Psoas muscle (tissue), 8 donors: ENCODE measurements at regions of chr9 and their contacts with region 1.

Region 1: DNA sequence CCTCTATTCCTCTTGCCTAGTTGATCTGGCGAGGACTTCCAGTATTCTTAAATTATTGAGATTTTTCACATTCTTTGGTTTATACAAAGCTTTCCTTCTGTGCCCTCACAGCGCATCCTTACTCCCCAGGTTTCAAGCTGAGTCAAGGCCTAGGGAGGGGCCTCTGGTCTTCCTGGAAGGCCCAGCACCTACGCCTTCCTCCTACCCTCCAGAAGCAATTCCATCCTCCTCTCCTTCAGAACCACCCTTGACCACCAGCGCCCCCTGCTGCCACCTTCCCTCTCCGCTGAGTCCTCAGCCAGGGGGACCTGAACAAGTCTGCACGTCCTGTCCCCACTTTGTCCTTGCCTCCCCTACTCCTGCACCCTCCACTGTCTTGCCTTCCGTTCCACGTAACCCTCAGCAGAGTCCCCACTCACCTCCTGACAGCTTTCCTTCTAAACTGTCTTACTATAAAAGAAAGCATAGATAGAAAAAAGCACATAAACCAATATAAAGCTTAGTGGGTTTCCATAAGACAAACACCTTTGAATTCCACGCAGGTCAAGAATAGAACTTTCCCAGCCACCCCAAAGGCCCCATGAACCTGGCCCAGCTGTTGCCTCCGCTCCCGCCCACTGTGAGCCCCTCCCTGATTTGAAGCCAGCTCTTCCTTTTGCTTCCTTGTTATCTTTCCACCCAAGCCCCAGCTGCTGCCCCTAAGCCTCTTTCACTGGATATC is 63.0 kb upstream of the CTSL start:
- DNase-seq: peak; percentile 75 to 85
- ATAC-seq: peak; percentile 61 to 80 (median 70)
- H3K4me3 ChIP-seq: no peak overlapping the region
- H3K27ac ChIP-seq: no peak overlapping the region
- H3K4me1 ChIP-seq: no peaks in the 10 kb centered on the region
- H3K27me3 ChIP-seq: peaks cover 0 to 1% (median 0%) of the 10 kb centered on the region in 3 donors
- CTCF ChIP-seq: peak; percentile 68

Region 2: DNA sequence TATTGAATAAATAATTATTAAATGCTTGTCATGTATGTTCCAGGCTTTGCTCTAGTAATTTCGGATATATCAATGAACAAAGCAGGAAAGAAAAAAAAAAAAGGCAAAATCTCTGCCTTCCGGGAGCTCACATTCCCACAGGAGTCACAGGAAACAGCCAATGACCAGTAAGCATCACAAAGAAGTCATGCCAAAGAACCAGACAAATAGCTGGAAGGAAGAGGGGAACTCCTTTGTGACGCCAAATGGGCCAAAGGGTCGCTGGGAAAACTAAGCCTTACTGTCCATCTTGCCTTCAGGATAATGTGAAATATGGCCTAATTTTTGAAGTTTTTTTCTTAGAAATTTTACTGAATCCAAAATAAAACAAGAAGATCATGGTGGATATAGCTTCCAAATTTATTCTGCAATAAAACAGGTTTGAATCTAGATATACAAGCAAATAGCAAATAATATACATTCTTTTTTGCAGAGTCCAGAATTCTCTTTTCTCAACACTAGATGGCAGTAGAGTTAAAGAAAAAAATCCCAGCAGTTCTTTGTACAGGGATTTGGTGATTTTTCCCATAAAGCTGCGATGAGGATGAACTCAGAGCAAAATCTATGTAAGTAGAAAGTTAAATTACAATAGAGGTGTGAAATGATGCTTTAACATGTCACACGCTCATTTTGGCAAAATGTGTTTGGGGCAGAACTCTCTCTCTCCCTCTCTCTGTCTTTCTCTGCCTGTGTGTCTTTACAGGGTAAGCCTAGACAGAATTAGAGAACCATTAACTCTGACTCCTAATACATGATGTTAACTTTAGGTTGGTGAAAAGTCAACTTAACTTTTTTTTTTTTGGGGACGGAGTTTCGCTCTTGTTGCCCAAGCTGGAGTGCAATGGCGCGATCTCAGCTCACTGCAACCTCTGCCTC is 1248.7 kb before region 1 on chr9:
- intact Hi-C with region 1: loop called in 1 of 2 experiments (anchors 10 kb)
- DNase-seq: no peak
- ATAC-seq: peak in 1 of 4 donors; percentile 64
- H3K4me3 ChIP-seq: no peak overlapping the region
- H3K27ac ChIP-seq: no peak overlapping the region
- H3K4me1 ChIP-seq: no peaks in the 10 kb centered on the region
- H3K27me3 ChIP-seq: no peaks in the 10 kb centered on the region
- CTCF ChIP-seq: peak; percentile 73

Region 3: DNA sequence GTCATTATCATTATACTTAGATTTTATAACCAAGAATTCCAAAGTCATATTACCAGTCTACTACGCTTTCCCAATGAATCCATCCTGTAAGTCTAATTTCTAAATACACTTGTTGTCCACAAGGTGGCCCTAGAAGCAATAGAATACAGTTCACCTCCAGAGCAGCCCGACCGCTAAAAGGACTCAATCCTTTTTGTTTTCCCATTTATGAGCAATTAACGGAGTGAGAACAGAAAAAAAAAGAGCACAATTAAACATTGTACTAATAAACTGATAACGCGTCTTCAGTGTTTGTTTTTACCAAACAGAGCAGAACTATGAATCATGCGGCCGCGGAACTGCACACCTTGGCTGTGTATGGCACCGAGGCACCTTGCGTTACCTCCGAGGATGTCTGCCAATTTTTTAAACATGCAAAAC is 326.0 kb before region 1 on chr9:
- intact Hi-C with region 1: loop called (anchors 1 to 5 kb)
- DNase-seq: no peak
- ATAC-seq: peak in 3 of 4 donors; percentile 57 to 79 (median 68)
- H3K4me3 ChIP-seq: peak overlapping the region; percentile 17
- H3K27ac ChIP-seq: no peak overlapping the region
- H3K4me1 ChIP-seq: peaks cover 10% of the 10 kb centered on the region
- H3K27me3 ChIP-seq: peaks cover 0 to 14% (median 0%) of the 10 kb centered on the region in 3 donors
- CTCF ChIP-seq: peak; percentile 69

Region 4: GRCh38 chr9:87342743-87343142 is 320.2 kb before region 1 on chr9:
- intact Hi-C with region 1: loop called (anchors 1 to 5 kb)
- DNase-seq: peak; percentile 31 to 79
- ATAC-seq: peak in 1 of 4 donors; percentile 54
- H3K4me3 ChIP-seq: no peak overlapping the region
- H3K27ac ChIP-seq: no peak overlapping the region
- H3K4me1 ChIP-seq: peaks cover under 1% of the 10 kb centered on the region
- H3K27me3 ChIP-seq: peaks cover 0 to 14% (median 2%) of the 10 kb centered on the region in 3 donors
- CTCF ChIP-seq: no peak

Region 5: GRCh38 chr9:87497604-87498045 is 165.3 kb before region 1 on chr9 and contains the start of gene DAPK1:
- intact Hi-C with region 1: loop called in 1 of 2 experiments (anchors 10 kb)
- DNase-seq: peak; percentile 62 to 80
- ATAC-seq: peak; percentile 73 to 87 (median 80)
- H3K4me3 ChIP-seq: peak within 1 kb of the TSS; percentile 69
- H3K27ac ChIP-seq: no peak within 1 kb of the TSS
- H3K4me1 ChIP-seq: no peaks in the 10 kb centered on the region
- H3K27me3 ChIP-seq: peaks cover 0 to 2% (median 0%) of the 10 kb centered on the region in 3 donors
- CTCF ChIP-seq: no peak
- total RNA-seq, gene DAPK1: 2.2 to 8.4 (median 3.4) TPM

Region 6: GRCh38 chr9:87685871-87686513 is 23.0 kb after region 1 on chr9:
- intact Hi-C with region 1: no loop called
- DNase-seq: peak in 1 of 2 donors; percentile 33
- ATAC-seq: peak in 3 of 4 donors; percentile 13 to 48 (median 21)
- H3K4me3 ChIP-seq: no peak overlapping the region
- H3K27ac ChIP-seq: no peak overlapping the region
- H3K4me1 ChIP-seq: no peaks in the 10 kb centered on the region
- H3K27me3 ChIP-seq: no peaks in the 10 kb centered on the region
- CTCF ChIP-seq: no peak

Region 7: DNA sequence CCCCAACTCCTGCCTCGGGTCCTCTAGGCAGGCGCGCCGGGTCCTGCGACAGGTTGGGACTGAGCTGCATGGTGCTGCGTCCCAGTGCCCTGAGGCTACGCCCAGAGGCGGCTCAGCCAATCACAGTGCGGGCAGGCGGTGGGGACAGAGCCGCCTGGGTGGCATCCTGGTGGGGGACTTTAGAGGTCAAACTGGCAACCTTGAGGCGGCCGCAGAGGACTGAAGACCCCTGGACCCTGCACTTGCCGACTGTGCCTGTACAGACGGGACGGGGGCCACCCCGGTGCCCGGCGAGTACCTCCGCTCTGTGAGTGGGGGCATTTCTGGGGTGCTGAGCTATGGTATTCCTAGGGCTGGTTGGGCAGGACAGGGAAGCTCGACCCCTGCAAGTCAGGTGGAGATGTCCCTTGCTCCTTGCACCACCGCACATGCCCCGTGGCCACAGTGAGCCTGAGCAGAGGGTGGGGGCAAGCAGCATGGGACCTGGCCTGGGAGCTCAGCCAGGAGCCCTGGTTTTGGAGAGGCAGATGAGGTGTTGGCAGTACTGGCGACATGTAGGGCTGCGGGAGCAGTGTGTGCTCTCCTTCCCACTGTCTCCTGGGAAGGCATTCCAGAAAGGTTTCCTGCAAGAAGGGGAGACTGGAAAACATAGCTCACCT is 108.5 kb after region 1 on chr9:
- intact Hi-C with region 1: no loop called
- DNase-seq: no peak
- ATAC-seq: no peak
- H3K4me3 ChIP-seq: no peak overlapping the region
- H3K27ac ChIP-seq: no peak overlapping the region
- H3K4me1 ChIP-seq: no peaks in the 10 kb centered on the region
- H3K27me3 ChIP-seq: peaks cover 0 to 12% (median 6%) of the 10 kb centered on the region in 3 donors
- CTCF ChIP-seq: no peak